T-cell (primary cell): ENCODE measurements at regions of chr5 and their contacts with region 1.

Region 1: GRCh38 chr5:132456296-132457001 is 34.1 kb downstream of the IRF1 start:
- DNase-seq: peak in 34 of 35 experiments; percentile 48 to 83 (median 70)
- ATAC-seq: peak; percentile 77 to 82 (median 78)
- H3K4me3 ChIP-seq: peak overlapping the region; percentile 23 to 32
- H3K4me3 Mint-ChIP-seq: peak overlapping the region; percentile 58 to 76 (median 70)
- H3K27ac ChIP-seq: peak overlapping the region; percentile 96
- H3K27ac Mint-ChIP-seq: peak overlapping the region; percentile 100
- H3K4me1 ChIP-seq: peaks cover 47 to 84% of the 10 kb centered on the region in 2 experiments
- H3K4me1 Mint-ChIP-seq: peaks cover 92 to 95% (median 93%) of the 10 kb centered on the region in 3 donors
- H3K27me3 ChIP-seq: no peaks in the 10 kb centered on the region
- H3K27me3 Mint-ChIP-seq: no peaks in the 10 kb centered on the region

Region 2: DNA sequence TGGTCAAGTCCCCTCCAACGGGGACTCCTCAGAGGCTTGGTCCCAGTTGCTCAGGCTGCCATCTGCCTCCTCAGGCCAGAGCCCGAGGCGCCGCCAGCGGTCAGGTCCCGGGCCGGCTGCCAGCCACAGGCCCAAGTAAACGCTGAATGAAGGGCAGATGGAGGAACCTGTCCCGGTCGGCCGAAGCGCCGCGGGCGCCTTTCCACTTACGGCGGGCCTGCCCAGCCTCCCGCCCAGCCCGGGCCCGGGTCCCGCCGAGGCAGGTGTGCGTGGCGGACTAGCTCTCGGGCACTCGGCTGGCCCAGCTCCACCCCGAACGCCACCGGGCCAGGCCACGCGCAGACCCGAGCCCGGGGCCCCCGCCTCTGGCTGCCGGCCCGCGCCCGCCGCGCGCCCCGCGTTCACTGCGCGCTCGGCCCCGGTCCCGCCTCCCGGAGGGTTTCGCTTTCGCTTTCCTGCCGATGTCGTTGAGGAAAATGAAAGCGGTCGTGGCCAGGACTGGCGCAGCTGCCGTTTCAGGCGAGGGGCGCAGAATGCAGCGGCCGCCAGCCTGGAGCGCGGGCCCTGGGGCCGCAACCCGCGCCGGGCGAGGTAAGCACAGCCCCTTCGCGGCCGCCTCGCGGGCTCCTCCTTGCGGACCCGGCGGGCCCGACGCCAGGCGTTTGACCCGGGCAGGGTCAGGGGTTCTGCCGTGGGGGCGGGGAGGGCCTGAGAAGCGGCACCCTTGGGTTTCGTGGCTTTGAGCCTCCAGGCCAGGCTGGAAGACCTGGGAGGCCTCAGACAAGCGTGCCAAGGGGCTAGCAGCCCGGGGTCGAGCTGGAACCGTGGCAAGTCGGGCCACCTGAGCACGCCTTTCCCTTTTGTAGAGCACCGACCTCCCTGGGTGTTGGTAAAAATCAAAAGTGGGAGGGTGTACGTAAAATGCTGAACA is 45.7 kb before region 1 on chr5:
- CTCF ChIA-PET with region 1: interaction called in 1 of 2 experiments, 16 read pairs
- POLR2A ChIA-PET with region 1: interaction called in 1 of 2 experiments, 5 read pairs
- DNase-seq: peak; percentile 67 to 93 (median 79)
- ATAC-seq: peak; percentile 70 to 77 (median 74)
- H3K4me3 ChIP-seq: peak overlapping the region; percentile 87 to 94
- H3K4me3 Mint-ChIP-seq: peak overlapping the region; percentile 98 to 99 (median 98)
- H3K27ac ChIP-seq: peak overlapping the region; percentile 98
- H3K27ac Mint-ChIP-seq: peak overlapping the region; percentile 99
- H3K4me1 ChIP-seq: peaks cover 19 to 52% of the 10 kb centered on the region in 2 experiments
- H3K4me1 Mint-ChIP-seq: peaks cover 73 to 85% (median 84%) of the 10 kb centered on the region in 3 donors
- H3K27me3 ChIP-seq: no peaks in the 10 kb centered on the region
- H3K27me3 Mint-ChIP-seq: no peaks in the 10 kb centered on the region

Region 3: GRCh38 chr5:132426525-132427138 is 29.8 kb before region 1 on chr5:
- CTCF ChIA-PET with region 1: interaction called, 3 to 41 read pairs
- POLR2A ChIA-PET with region 1: interaction called, 3 to 45 read pairs
- DNase-seq: peak; percentile 15 to 72 (median 44)
- ATAC-seq: peak; percentile 24 to 49 (median 38)
- H3K4me3 ChIP-seq: peak overlapping the region; percentile 2 to 17
- H3K4me3 Mint-ChIP-seq: peak overlapping the region; percentile 64 to 77 (median 68)
- H3K27ac ChIP-seq: peak overlapping the region; percentile 94
- H3K27ac Mint-ChIP-seq: peak overlapping the region; percentile 98 to 100
- H3K4me1 ChIP-seq: peaks cover 61 to 97% of the 10 kb centered on the region in 2 experiments
- H3K4me1 Mint-ChIP-seq: peaks cover 94 to 99% (median 98%) of the 10 kb centered on the region in 3 donors
- H3K27me3 ChIP-seq: no peaks in the 10 kb centered on the region
- H3K27me3 Mint-ChIP-seq: no peaks in the 10 kb centered on the region

Region 4: DNA sequence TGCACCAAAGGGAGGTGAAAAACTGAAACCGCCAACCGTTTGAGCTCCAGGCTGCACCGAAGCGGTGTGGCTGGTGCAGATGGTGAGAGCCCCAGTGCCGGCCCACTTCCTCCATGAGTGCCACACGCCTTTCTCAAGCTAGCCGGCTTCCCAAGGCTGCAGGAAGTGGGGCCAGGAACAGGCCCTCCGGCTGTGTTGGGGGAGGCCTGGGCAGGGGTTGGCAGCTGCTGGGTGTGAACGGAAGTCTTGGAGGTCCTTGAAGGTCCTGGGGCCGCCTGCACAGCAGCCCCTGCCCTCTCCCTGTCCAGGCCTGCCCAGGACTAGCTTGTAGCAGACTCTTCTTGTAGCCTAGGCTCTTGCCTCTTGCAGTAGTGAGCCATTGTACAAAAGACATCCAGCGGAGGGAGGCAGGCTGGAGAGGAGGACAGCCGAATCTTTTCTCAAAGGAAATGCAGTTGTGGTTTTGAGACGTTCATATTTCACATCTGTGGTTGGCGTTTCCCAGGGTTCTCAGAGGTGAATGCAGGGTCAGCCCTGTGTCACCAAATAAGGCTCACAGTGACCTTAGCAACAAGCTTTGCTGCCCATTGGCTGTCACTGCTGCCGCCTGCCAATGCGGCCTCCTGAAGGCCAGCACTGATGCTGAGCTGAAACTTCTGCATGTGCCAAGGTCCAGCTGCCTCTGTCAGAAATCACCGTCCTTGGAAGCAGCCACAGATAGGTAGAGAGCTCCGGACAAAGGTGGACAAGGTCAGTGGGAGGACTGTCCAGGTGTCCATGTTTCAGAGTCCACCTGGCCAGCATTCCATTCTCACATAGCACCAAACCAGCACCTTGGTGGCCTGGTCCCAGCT is 10.2 kb after region 1 on chr5:
- CTCF ChIA-PET with region 1: interaction called, 3 to 61 read pairs
- POLR2A ChIA-PET with region 1: interaction called, 5 to 49 read pairs
- DNase-seq: peak; percentile 56 to 85 (median 74)
- ATAC-seq: peak; percentile 58 to 84 (median 81)
- H3K4me3 ChIP-seq: peak overlapping the region; percentile 2 to 32
- H3K4me3 Mint-ChIP-seq: peak overlapping the region; percentile 65 to 77 (median 66)
- H3K27ac ChIP-seq: peak overlapping the region; percentile 95
- H3K27ac Mint-ChIP-seq: peak overlapping the region; percentile 97 to 100
- H3K4me1 ChIP-seq: peaks cover 56 to 91% of the 10 kb centered on the region in 2 experiments
- H3K4me1 Mint-ChIP-seq: peaks cover 94 to 99% (median 96%) of the 10 kb centered on the region in 3 donors
- H3K27me3 ChIP-seq: no peaks in the 10 kb centered on the region
- H3K27me3 Mint-ChIP-seq: no peaks in the 10 kb centered on the region

Region 5: GRCh38 chr5:132479111-132479951 is 22.9 kb after region 1 on chr5:
- CTCF ChIA-PET with region 1: interaction called, 3 read pairs
- POLR2A ChIA-PET with region 1: interaction called, 34 to 38 read pairs
- DNase-seq: peak in 2 of 35 experiments; percentile 0 to 43
- ATAC-seq: no peak
- H3K4me3 ChIP-seq: no peak overlapping the region
- H3K4me3 Mint-ChIP-seq: peak overlapping the region in 1 of 3 donors; percentile 13
- H3K27ac ChIP-seq: peak overlapping the region; percentile 43
- H3K27ac Mint-ChIP-seq: peak overlapping the region; percentile 83 to 87
- H3K4me1 ChIP-seq: peaks cover 3 to 94% of the 10 kb centered on the region in 2 experiments
- H3K4me1 Mint-ChIP-seq: peaks cover 81 to 87% (median 83%) of the 10 kb centered on the region in 3 donors
- H3K27me3 ChIP-seq: no peaks in the 10 kb centered on the region
- H3K27me3 Mint-ChIP-seq: no peaks in the 10 kb centered on the region

Region 6: GRCh38 chr5:132963175-132964104 is 507.0 kb after region 1 on chr5 and contains the start of gene AFF4:
- CTCF ChIA-PET with region 1: no interaction called
- POLR2A ChIA-PET with region 1: interaction called in 1 of 2 experiments, 11 read pairs
- DNase-seq: peak; percentile 63 to 89 (median 77)
- ATAC-seq: peak; percentile 77 to 83 (median 82)
- H3K4me3 ChIP-seq: peak within 1 kb of the TSS; percentile 75 to 76
- H3K4me3 Mint-ChIP-seq: peak within 1 kb of the TSS; percentile 91 to 96 (median 93)
- H3K27ac ChIP-seq: peak within 1 kb of the TSS; percentile 94
- H3K27ac Mint-ChIP-seq: peak within 1 kb of the TSS; percentile 95 to 96
- H3K4me1 ChIP-seq: peaks cover 12 to 27% of the 10 kb centered on the region in 2 experiments
- H3K4me1 Mint-ChIP-seq: peaks cover 40% of the 10 kb centered on the region in 3 donors
- H3K27me3 ChIP-seq: no peaks in the 10 kb centered on the region
- H3K27me3 Mint-ChIP-seq: no peaks in the 10 kb centered on the region
- total RNA-seq, gene AFF4: 44.2 to 74.1 (median 53.0) TPM